Gastrocnemius medialis (tissue), 4 donors: ENCODE measurements at regions of chr14 and their contacts with region 1.

Region 1: DNA sequence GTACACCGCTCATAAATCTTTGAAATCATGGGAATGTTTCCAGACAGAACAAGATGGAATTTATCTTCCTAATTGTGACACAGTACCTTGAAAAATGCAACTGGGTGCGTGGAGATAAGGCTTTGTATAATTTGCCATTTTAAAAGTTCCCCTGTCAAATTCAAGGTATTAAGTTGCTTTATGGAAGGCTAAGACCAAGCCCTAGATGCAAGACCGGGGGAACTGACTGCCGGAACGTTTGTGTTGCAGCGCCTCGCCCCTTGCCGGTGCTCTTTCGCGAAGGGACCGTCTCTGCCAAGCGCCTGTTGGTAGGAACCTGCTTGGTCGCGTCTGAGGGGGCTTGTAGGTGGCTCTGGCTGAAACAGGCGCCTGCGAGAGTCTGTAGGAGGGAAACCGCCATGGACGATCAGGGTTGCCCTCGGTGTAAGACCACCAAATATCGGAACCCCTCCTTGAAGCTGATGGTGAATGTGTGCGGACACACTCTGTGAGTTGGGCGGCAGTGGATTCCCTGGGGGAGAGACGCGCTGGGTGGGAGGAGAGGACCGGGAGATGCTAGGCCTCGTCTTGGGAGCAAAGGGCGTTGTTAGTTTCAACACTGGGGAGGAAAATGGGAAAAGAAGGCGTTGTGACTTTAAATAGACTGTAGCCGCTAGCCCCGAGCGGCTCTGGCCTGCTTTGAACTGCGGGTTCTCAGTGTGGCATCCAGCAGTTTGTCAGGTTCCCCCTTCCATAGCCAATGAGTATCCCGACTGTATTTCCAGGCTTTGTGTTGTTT is at the start of gene MNAT1:
- DNase-seq: peak; percentile 76 to 77
- ATAC-seq: peak; percentile 72 to 73
- H3K4me3 ChIP-seq: peak within 1 kb of the TSS; percentile 69 to 84 (median 76)
- H3K27ac ChIP-seq: peak within 1 kb of the TSS; percentile 90 to 94 (median 92)
- H3K4me1 ChIP-seq: peaks cover 32 to 37% of the 10 kb centered on the region in 2 donors
- H3K27me3 ChIP-seq: no peaks in the 10 kb centered on the region
- CTCF ChIP-seq: peak in 2 of 5 experiments; percentile 23 to 26
- POLR2A ChIP-seq: peak; percentile 54 to 65
- total RNA-seq, gene MNAT1: 50.1 to 69.2 (median 62.0) TPM

Region 2: GRCh38 chr14:60575008-60575407 is 159.6 kb before region 1 on chr14:
- in situ Hi-C with region 1: no loop called
- intact Hi-C with region 1: no loop called
- DNase-seq: peak in 1 of 2 donors; percentile 30
- ATAC-seq: peak in 1 of 2 donors; percentile 83
- H3K4me3 ChIP-seq: no peak overlapping the region
- H3K27ac ChIP-seq: peak overlapping the region in 1 of 4 donors; percentile 25
- H3K4me1 ChIP-seq: no peaks in the 10 kb centered on the region
- H3K27me3 ChIP-seq: no peaks in the 10 kb centered on the region
- CTCF ChIP-seq: no peak
- POLR2A ChIP-seq: no peak

Region 3: GRCh38 chr14:60637479-60638315 is 97.0 kb before region 1 on chr14:
- in situ Hi-C with region 1: loop called in 2 of 4 experiments (anchors 10 kb)
- intact Hi-C with region 1: no loop called
- DNase-seq: peak in 1 of 2 donors; percentile 40
- ATAC-seq: peak; percentile 37 to 48
- H3K4me3 ChIP-seq: peak overlapping the region; percentile 57 to 69 (median 62)
- H3K27ac ChIP-seq: peak overlapping the region; percentile 93 to 98 (median 95)
- H3K4me1 ChIP-seq: peaks cover 44 to 52% of the 10 kb centered on the region in 2 donors
- H3K27me3 ChIP-seq: no peaks in the 10 kb centered on the region
- CTCF ChIP-seq: peak in 1 of 5 experiments; percentile 13
- POLR2A ChIP-seq: no peak

Region 4: DNA sequence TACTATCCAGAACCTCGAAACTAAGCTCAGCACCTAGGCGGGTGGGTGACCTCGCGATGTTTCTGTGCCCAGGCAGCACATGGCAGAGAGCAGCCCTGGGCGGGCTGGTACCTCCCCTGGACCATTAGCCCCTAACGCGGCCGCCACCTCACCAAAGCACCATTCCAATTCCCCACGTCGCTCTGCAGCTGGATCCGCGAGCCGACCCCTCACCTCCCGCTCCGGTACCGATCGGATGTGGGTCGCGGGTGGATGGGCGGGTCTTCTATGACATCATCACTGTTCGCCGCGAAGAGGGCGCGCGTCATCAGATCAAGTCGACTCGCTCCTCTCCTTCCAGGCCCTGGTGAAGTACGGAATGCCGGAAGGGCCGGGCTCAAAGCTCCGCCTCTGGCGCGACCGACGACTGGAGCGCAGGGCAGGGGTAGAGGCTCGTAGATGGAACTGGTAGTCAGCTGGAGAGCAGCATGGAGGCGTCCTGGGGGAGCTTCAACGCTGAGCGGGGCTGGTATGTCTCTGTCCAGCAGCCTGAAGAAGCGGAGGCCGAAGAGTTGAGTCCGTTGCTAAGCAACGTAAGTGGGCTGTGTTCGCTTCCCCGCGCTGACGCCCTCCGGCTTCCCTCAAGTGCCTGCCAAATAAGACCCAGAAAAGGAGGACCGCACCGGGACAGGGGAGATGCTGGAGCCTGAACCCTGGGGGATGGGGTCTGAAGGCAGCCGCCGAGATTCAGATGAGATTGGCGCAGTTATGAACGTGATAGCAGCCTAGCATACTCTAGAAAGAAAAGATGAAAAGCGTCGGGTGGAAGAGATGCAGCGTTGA is 246.4 kb after region 1 on chr14 and contains the starts of genes SLC38A6 and TRMT5:
- in situ Hi-C with region 1: loop called in 1 of 4 experiments (anchors 10 kb)
- intact Hi-C with region 1: loop called (anchors 2 kb)
- DNase-seq: peak; percentile 92 to 94
- ATAC-seq: peak; percentile 86 to 92
- H3K4me3 ChIP-seq: peak within 1 kb of the TSS; percentile 69 to 90 (median 83)
- H3K27ac ChIP-seq: peak within 1 kb of the TSS; percentile 88 to 95 (median 90)
- H3K4me1 ChIP-seq: peaks cover 56 to 57% of the 10 kb centered on the region in 2 donors
- H3K27me3 ChIP-seq: no peaks in the 10 kb centered on the region
- CTCF ChIP-seq: peak in 1 of 5 experiments; percentile 30
- POLR2A ChIP-seq: peak; percentile 48 to 58
- total RNA-seq, gene SLC38A6: 4.0 to 22.6 (median 7.0) TPM
- total RNA-seq, gene TRMT5: 5.9 to 7.6 (median 6.5) TPM

Region 5: GRCh38 chr14:61125867-61126572 is 391.4 kb after region 1 on chr14:
- in situ Hi-C with region 1: no loop called
- intact Hi-C with region 1: loop called (anchors 5 kb)
- DNase-seq: peak; percentile 87 to 96
- ATAC-seq: peak; percentile 48 to 50
- H3K4me3 ChIP-seq: peak overlapping the region; percentile 1 to 31 (median 17)
- H3K27ac ChIP-seq: peak overlapping the region; percentile 94 to 99 (median 98)
- H3K4me1 ChIP-seq: peaks cover 70 to 75% of the 10 kb centered on the region in 2 donors
- H3K27me3 ChIP-seq: no peaks in the 10 kb centered on the region
- CTCF ChIP-seq: no peak
- POLR2A ChIP-seq: no peak

Region 6: GRCh38 chr14:61525293-61526011 is 790.8 kb after region 1 on chr14:
- in situ Hi-C with region 1: no loop called
- intact Hi-C with region 1: loop called (anchors 10 kb)
- DNase-seq: peak; percentile 70 to 71
- ATAC-seq: peak; percentile 72 to 73
- H3K4me3 ChIP-seq: no peak overlapping the region
- H3K27ac ChIP-seq: peak overlapping the region; percentile 60 to 83 (median 66)
- H3K4me1 ChIP-seq: peaks cover 30 to 44% of the 10 kb centered on the region in 2 donors
- H3K27me3 ChIP-seq: no peaks in the 10 kb centered on the region
- CTCF ChIP-seq: no peak
- POLR2A ChIP-seq: peak in 1 of 2 donors; percentile 10